Heart right ventricle (tissue), 16 donors: ENCODE measurements at regions of chr6 and their contacts with region 1.

Region 1: DNA sequence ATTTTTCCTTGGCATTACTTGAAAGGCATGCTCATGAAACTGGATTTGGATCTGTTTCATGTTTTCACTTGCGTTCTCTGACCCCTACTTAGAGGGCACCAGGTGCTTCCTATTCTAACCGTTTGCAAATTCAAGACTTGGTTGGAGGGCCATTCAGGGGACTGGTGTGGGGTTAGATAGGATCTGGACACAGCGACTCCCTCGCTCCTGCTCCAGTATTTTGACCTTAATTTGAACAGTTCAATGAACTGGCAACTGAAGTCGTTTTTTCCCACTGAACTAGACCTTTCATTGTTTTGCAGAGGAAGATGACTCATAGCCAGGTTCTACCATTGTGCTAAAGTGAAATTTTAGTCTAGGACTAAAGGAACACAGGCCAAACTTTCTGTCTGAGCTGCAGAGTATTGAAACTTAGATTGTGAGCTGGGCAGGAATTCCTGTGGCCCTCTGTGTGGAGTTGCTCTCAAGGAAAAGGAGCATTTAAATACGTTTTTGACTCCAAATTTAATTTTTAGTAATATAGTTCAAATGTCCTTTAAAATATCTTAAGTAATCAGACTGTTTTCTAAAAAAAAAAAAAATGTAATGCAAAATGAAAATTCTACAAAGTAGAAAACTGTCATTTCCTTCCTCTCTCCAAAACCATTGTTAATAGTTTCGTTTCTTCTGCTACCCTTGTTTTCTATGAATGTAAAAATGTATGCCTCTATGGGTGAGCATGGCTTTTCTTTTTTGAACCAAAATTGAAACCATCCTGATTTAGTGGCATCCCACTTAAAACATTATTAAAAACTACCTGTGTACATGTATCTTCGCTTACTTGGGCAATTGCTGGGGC is 64.8 kb downstream of the UTRN start:
- DNase-seq: peak in 1 of 2 donors; percentile 56
- ATAC-seq: peak; percentile 65 to 91 (median 83)
- H3K4me3 ChIP-seq: peak overlapping the region in 4 of 10 donors; percentile 12 to 24 (median 14)
- H3K27ac ChIP-seq: peak overlapping the region in 9 of 10 donors; percentile 33 to 85 (median 68)
- H3K4me1 ChIP-seq: peaks cover 7 to 100% (median 85%) of the 10 kb centered on the region in 9 donors
- H3K27me3 ChIP-seq: no peaks in the 10 kb centered on the region
- CTCF ChIP-seq: no peak

Region 2: DNA sequence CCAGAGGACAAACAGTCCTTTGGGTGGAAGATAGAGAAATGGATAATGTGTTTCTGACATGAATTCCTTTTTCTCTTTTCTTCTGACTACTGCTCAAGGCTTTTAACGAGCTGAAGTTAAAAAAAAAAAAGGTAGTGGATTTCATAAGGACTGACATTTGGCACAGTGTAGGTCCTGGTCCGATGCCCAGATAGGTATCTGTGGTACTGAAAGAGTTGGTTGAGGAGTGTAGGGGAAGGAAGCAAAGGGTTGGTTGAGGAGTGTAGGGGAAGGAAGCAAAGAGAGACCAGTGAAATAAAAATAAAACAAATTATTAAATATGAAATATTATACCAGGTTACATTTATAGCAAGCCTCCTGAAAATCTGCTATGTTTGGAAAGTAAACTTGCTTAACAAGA is 52.9 kb before region 1 on chr6:
- intact Hi-C with region 1: no loop called
- DNase-seq: peak in 1 of 2 donors; percentile 27
- ATAC-seq: peak in 6 of 8 donors; percentile 52 to 85 (median 64)
- H3K4me3 ChIP-seq: no peak overlapping the region
- H3K27ac ChIP-seq: peak overlapping the region in 9 of 10 donors; percentile 1 to 80 (median 68)
- H3K4me1 ChIP-seq: peaks cover 3 to 66% (median 47%) of the 10 kb centered on the region in 9 donors
- H3K27me3 ChIP-seq: no peaks in the 10 kb centered on the region
- CTCF ChIP-seq: no peak

Region 3: GRCh38 chr6:144334131-144334708 is 15.7 kb before region 1 on chr6:
- intact Hi-C with region 1: no loop called
- DNase-seq: no peak
- ATAC-seq: peak in 4 of 8 donors; percentile 14 to 56 (median 28)
- H3K4me3 ChIP-seq: peak overlapping the region in 1 of 10 donors; percentile 34
- H3K27ac ChIP-seq: peak overlapping the region in 4 of 10 donors; percentile 14 to 70 (median 38)
- H3K4me1 ChIP-seq: peaks cover 12 to 90% (median 54%) of the 10 kb centered on the region in 9 donors
- H3K27me3 ChIP-seq: no peaks in the 10 kb centered on the region
- CTCF ChIP-seq: no peak

Region 4: DNA sequence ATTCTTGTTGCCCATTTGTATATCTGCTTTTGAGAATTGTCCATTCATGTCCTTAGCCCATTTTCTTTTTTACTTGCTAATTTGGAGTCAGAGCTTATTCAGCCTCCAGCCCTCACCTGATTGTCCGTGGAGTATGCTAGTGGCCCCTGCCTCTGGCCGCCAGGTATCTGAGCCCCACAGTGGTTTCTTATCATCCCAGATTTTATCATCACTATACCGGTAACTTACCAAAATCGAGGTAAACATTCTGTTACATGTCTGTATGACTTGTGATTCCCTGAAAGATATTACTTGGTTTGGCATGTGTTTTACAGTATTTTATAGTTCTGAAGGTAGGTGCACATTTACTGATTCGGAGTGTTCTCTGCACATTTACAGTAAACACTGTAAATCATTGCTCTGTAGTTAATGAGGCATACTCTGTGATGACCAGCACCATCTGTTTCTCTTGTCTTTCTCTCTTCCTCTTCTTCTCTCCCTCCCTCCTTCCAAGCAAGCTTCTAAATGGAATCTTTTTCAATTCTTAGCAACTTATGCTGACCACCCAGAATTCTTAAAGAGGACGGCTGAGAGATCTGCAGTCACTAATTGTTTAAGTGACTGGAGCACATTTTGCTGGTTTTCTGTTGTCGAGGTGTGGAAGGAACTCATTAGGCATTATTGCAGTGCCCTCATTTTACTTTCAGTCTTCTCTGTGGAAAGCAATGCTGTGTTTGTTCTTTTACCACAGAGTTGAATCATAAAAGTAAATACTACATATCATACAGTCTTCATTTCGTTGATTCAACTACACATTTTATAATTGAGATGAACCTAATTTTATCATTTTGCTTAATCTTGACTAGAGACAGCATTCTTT is 61.7 kb after region 1 on chr6:
- intact Hi-C with region 1: loop called in 1 of 10 experiments (anchors 10 kb)
- DNase-seq: no peak
- ATAC-seq: no peak
- H3K4me3 ChIP-seq: no peak overlapping the region
- H3K27ac ChIP-seq: no peak overlapping the region
- H3K4me1 ChIP-seq: peaks cover 3 to 83% (median 46%) of the 10 kb centered on the region in 9 donors
- H3K27me3 ChIP-seq: no peaks in the 10 kb centered on the region
- CTCF ChIP-seq: no peak